ENCODE measurements at regions of chr1 and their contacts with region 1.

Region 1: DNA sequence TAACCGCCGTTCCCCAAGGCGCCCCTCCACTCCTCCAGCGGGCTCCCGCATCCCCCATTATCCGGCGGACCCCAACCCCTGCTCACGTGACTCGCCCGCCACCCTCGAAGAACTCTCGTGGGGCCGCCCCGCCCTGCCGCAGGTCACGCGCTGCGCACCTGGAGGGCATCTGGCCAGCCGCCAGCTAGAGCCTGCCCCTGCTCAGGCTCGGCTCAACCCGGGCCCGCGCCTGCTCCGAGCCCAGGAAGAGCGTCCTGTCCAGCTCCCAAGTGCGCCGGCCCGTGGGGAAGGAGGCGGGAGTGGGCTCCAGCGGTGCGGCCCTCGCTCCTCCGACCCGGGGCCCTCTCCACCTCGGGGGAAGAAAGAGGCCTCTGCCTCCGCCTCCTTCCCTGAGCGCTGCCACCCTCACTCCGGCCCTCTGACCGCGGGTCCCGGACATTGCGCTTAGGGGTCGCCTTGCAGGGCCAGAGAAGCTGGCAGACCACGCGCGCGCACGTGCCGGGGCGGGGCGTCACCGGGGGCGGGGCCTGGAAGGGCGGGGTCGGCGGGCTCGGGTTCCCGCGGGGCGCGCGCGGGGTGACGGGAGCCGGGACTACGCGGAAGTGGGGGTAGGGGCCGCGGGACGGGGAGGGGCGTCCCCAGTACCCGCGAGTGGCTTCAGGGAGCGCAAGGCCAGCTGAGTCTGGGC is 28.4 kb downstream of the HMGN2 start:
- DNase-seq: peak; percentile 78 to 90
- H3K4me3 ChIP-seq: peak overlapping the region; percentile 57 to 96 (median 83)
- H3K27ac ChIP-seq: peak overlapping the region; percentile 95 to 98
- H3K4me1 ChIP-seq: no peaks in the 10 kb centered on the region
- H3K27me3 ChIP-seq: no peaks in the 10 kb centered on the region
- CTCF ChIP-seq: peak in 1 of 3 donors; percentile 12
- POLR2A ChIP-seq: no peak

Region 2: GRCh38 chr1:26477446-26478152 is 23.0 kb before region 1 on chr1:
- intact Hi-C with region 1: loop called (anchors 1 kb)
- DNase-seq: no peak
- H3K4me3 ChIP-seq: no peak overlapping the region
- H3K27ac ChIP-seq: no peak overlapping the region
- H3K4me1 ChIP-seq: peaks cover 0 to 8% of the 10 kb centered on the region in 2 donors
- H3K27me3 ChIP-seq: no peaks in the 10 kb centered on the region
- CTCF ChIP-seq: no peak
- POLR2A ChIP-seq: no peak

Measured in breast epithelium (tissue), 4 donors.